BJ (cell line): ENCODE measurements at regions of chr18 and their contacts with region 1.

Region 1: GRCh38 chr18:59569390-59569791 is 127.8 kb downstream of the CCBE1 start:
- DNase-seq: no peak
- H3K4me3 ChIP-seq: no peak overlapping the region
- H3K27me3 ChIP-seq: no peaks in the 10 kb centered on the region
- CTCF ChIP-seq: no peak

Region 2: GRCh38 chr18:59597049-59597448 is 27.7 kb after region 1 on chr18:
- CTCF ChIA-PET with region 1: no interaction called
- POLR2A ChIA-PET with region 1: no interaction called
- DNase-seq: no peak
- H3K4me3 ChIP-seq: no peak overlapping the region
- H3K27me3 ChIP-seq: no peaks in the 10 kb centered on the region
- CTCF ChIP-seq: no peak

Region 3: DNA sequence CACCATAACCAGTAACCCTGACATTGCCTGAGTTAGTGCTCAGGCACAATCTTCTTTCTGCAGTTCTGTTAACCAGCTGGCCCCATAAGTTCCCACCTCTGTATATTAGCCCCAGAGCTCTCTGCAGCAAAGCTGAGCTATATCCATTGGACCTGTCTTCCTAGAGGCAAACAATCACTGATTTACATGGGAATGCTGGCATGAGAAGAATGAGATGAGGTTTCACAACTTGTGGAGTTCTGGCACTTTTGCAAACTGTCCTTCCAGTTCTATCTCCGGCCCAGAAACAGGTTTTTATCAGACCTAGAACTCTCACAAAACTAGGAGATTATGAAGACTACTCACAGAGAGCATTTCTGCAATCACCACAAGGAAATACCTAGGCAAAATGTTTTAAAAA is 135.8 kb after region 1 on chr18:
- CTCF ChIA-PET with region 1: no interaction called
- POLR2A ChIA-PET with region 1: interaction called, 16 read pairs
- DNase-seq: no peak
- H3K4me3 ChIP-seq: no peak overlapping the region
- H3K27me3 ChIP-seq: no peaks in the 10 kb centered on the region
- CTCF ChIP-seq: no peak

Region 4: GRCh38 chr18:59837586-59837985 is 268.2 kb after region 1 on chr18:
- CTCF ChIA-PET with region 1: no interaction called
- POLR2A ChIA-PET with region 1: no interaction called
- DNase-seq: no peak
- H3K4me3 ChIP-seq: no peak overlapping the region
- H3K27me3 ChIP-seq: peaks cover 2% of the 10 kb centered on the region; the same call in 1 of the 2 replicates
- CTCF ChIP-seq: peak; percentile 91